Ascending aorta (tissue), 2 donors: ENCODE measurements at regions of chr22 and their contacts with region 1.

Region 1: GRCh38 chr22:45309472-45310227 is at the start of gene FAM118A:
- DNase-seq: peak; percentile 76 to 95
- H3K4me3 ChIP-seq: peak within 1 kb of the TSS; percentile 93 to 99
- H3K27ac ChIP-seq: peak within 1 kb of the TSS; percentile 78 to 89
- H3K4me1 ChIP-seq: peaks cover 0 to 3% of the 10 kb centered on the region in 2 donors
- H3K27me3 ChIP-seq: no peaks in the 10 kb centered on the region
- CTCF ChIP-seq: no peak
- total RNA-seq, gene FAM118A: 23.5 TPM

Region 2: DNA sequence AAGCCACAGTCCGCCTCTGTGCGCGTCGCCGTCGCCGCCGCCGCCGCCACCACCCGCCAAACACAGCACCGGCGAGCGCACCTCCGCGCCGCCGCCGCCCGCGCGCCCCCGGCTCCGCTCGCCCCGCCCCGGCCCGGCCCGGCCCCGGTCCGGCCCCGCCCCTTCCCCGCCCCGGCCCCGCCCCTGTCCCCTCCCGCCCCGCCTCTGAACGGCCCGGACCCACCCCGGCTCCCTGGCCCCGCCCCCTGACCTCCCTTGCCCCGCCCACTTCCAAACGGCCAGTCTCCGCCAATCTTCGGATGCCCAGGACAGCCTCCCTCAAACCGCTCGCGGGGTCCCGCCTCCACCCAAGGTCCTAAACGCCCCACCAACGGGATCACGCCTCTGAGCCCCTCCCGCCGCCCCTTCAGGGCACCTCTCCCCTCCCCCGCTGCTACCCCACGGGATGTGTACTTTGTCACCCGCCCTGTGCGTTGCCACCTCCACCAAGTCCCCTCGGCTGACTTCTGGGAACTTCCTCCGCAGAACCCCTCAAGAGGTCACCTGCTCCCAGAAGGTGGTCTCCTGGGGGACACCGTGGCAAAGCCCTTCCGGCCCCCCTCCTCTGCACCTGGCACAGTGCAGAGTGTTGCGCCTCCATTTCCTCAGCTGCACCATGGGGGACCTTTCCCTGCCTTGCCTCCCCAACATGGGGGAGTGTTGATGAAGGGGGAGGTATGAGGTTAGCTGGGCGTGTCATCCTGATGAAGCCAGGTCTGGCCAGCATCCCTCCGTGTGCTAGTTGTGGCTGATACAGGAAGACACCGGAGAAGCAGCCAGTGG is 68.6 kb before region 1 on chr22 and contains the start of gene KIAA0930:
- intact Hi-C with region 1: loop called (anchors 1 kb)
- DNase-seq: peak; percentile 54 to 91
- H3K4me3 ChIP-seq: peak within 1 kb of the TSS; percentile 69 to 95
- H3K27ac ChIP-seq: peak within 1 kb of the TSS; percentile 69 to 76
- H3K4me1 ChIP-seq: peaks cover 8 to 19% of the 10 kb centered on the region in 2 donors
- H3K27me3 ChIP-seq: no peaks in the 10 kb centered on the region
- CTCF ChIP-seq: no peak
- total RNA-seq, gene KIAA0930: 60.0 TPM

Region 3: DNA sequence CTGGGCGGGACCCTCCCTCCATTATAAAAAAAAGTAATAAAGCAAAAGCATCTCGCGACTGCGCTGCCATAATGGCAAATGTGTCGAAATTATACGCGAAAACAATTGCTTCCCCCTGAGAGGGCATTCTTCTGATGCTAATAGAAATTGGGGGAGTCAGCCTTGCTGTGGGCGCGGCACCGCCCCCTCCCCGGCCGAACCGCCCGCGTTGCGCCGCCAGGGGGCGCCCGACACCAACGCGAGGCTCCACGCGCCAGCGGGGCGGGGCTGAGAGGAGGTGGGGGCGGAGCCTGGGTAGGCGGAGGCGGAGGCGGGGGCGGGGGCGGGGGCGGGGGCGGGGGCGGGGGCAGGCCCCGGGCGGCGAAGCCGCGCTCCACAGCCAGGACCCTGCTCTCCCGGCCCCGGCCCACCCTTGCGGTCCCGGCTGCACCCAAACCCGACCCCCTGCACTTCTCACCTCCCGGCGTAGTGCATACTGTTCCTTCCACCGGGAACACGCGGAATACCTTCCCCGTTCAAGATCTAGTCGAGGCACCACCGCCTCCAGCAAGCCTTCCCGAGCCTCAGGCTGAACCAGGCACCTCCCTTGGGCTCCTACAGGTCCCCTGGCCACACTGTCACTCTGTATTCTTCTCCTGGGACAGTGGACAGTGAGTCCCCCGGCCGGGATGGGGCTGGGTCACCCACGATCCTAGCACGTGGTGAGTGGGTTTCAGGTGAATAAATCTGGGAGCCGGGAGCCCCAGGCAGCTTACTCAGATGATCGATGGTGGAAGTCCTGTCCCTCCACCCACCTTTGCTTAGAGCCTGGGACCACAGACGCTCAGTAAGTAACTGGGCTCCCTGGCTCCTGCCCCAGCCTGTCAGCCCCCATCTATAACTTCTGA is 40.4 kb before region 1 on chr22:
- intact Hi-C with region 1: loop called (anchors 1 kb)
- DNase-seq: peak in 1 of 2 donors; percentile 91
- H3K4me3 ChIP-seq: peak overlapping the region; percentile 70 to 72
- H3K27ac ChIP-seq: peak overlapping the region in 1 of 2 donors; percentile 17
- H3K4me1 ChIP-seq: peaks cover 8 to 27% of the 10 kb centered on the region in 2 donors
- H3K27me3 ChIP-seq: no peaks in the 10 kb centered on the region
- CTCF ChIP-seq: peak; percentile 74 to 97 (median 83)

Region 4: DNA sequence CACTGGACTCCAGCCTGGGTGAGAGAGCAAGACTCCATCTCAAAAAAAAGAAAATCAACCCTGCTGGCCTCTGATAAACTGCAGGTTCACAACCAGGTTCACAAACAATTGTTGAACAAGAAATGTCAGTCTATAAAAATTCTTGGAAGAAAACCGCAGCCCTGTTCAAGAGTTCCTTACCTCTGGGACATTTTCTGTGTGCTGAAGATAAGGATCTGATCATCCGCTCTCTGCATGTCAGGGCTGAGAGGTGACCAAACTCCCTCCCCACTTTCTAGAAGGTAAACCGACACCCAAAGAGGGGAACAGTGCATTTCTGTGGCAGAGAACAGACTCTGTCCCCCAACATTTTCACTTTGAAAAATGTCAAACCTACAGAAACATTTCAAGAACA is 29.1 kb before region 1 on chr22:
- intact Hi-C with region 1: loop called (anchors 1 kb)
- DNase-seq: no peak
- H3K4me3 ChIP-seq: no peak overlapping the region
- H3K27ac ChIP-seq: peak overlapping the region; percentile 48 to 66
- H3K4me1 ChIP-seq: peaks cover 7 to 24% of the 10 kb centered on the region in 2 donors
- H3K27me3 ChIP-seq: no peaks in the 10 kb centered on the region
- CTCF ChIP-seq: no peak

Region 5: DNA sequence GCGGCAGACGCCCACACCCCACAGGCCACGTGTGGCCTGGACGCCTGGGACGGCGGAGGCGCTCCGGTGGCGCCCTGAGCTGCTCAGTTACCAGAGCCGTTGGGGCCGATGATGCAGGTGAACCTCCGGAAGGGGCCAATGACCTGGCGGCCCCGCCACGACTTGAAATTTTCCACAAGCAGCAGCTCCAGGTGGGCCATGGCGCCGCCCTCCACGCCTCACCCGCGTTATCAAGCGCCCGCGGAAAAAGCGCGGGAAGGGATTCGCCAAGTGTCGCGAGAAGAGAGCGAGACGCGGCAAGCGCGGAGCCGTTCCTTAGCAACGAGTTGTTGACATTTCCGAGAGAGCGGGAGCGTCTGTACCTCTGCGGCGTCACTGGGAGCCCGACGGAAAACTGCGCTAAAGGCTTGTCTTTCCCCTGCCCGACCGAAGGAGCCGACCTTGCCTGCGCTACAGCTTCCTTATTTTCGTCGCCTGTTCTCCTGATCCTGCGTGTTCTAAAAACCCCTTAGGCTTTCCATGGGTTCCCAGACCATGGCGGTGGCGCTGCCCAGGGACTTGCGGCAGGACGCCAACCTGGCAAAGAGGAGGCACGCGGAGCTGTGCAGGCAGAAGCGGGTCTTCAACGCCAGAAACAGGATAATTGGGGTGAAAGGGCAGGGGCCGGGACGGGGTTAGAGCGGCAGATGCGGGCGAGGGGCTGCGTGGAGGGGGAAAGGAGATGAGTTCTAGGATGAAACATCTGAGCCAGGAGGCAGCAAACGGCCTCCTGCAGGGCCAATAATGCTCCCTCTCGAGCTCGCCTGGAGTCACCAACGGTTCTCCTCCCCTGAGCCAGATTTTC is 103.9 kb after region 1 on chr22 and contains the starts of genes RIBC2 and SMC1B:
- intact Hi-C with region 1: loop called (anchors 1 kb)
- DNase-seq: peak in 1 of 2 donors; percentile 87
- H3K4me3 ChIP-seq: peak within 1 kb of the TSS; percentile 52 to 54
- H3K27ac ChIP-seq: peak within 1 kb of the TSS in 1 of 2 donors; percentile 5
- H3K4me1 ChIP-seq: peaks cover 0 to 7% of the 10 kb centered on the region in 2 donors
- H3K27me3 ChIP-seq: no peaks in the 10 kb centered on the region
- CTCF ChIP-seq: peak in 1 of 3 experiments; percentile 2
- total RNA-seq, gene RIBC2: not detected
- total RNA-seq, gene SMC1B: not detected

Region 6: GRCh38 chr22:45435544-45436139 is 126.0 kb after region 1 on chr22:
- intact Hi-C with region 1: loop called (anchors 5 kb)
- DNase-seq: peak; percentile 50 to 94
- H3K4me3 ChIP-seq: peak overlapping the region in 1 of 2 donors; percentile 42
- H3K27ac ChIP-seq: peak overlapping the region; percentile 63 to 75
- H3K4me1 ChIP-seq: peaks cover 0 to 4% of the 10 kb centered on the region in 2 donors
- H3K27me3 ChIP-seq: no peaks in the 10 kb centered on the region
- CTCF ChIP-seq: peak; percentile 92 to 97 (median 96)

Region 7: GRCh38 chr22:46116491-46116958 is 806.9 kb after region 1 on chr22:
- intact Hi-C with region 1: loop called (anchors 10 kb)
- DNase-seq: peak; percentile 67 to 97
- H3K4me3 ChIP-seq: no peak overlapping the region
- H3K27ac ChIP-seq: peak overlapping the region; percentile 72 to 94
- H3K4me1 ChIP-seq: peaks cover 9 to 31% of the 10 kb centered on the region in 2 donors
- H3K27me3 ChIP-seq: no peaks in the 10 kb centered on the region
- CTCF ChIP-seq: peak; percentile 96 to 98 (median 97)